ENCODE measurements at regions of chr2 and their contacts with region 1.

Region 1: DNA sequence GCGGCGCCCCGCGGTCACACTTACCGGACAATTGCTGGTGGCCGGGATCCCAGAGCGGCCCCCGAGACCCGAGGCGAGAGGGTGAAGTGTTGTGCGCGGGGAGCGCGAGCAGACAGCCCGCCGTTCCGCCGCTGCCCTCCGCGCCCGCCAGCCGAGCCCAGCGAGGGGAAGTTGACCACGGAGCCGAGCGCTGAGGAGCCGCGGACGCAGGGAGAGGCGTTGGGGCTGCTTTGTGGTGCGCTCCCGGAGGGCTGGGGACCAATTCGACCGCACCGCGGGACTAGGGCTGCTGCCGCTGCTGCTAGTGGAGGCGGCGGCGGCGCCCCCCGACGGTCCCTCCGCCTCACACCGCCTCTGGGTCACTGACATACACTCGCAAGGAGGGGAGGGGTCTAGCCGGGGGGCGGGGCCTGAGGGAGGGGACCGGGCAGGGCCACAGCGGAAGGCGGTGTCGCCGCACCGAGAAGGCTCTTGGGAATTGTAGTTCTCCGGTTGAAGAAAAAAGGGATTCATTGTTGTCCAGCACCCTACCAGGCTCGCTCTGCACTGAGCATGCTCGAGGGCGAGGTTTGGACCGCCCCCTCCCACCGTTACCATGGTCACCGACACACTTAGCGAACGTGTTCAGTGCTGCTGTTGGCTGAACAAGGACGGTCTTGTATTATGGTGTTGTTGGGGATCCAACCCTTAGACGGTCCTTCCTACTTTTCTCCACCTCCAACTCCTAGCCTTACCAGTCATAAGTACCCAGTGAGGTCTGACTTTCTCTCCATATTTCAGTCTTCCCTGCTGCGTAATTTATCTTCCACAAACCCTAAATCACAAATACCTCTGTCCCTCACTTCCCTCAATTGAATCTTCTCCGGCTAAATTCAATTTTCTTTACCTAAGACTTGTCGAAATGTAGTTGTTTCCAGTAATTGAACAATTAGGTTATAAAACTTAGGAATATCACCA is at the start of gene PELI1:
- DNase-seq: peak; percentile 96
- ATAC-seq: peak; percentile 86
- H3K4me3 ChIP-seq: peak within 1 kb of the TSS; percentile 95
- H3K27ac ChIP-seq: peak within 1 kb of the TSS; percentile 85
- H3K4me1 ChIP-seq: peaks cover 3% of the 10 kb centered on the region
- H3K27me3 ChIP-seq: no peaks in the 10 kb centered on the region
- CTCF ChIP-seq: peak; percentile 13 to 49 (median 34); a peak in 3 of 6 replicates
- EP300 ChIP-seq: no peak
- POLR2A ChIP-seq: peak; percentile 97
- RAD21 ChIP-seq: peak; percentile 36; the same call in 1 of the 2 replicates
- polyA plus RNA-seq, gene PELI1: 12.1 to 13.2 TPM

Region 2: DNA sequence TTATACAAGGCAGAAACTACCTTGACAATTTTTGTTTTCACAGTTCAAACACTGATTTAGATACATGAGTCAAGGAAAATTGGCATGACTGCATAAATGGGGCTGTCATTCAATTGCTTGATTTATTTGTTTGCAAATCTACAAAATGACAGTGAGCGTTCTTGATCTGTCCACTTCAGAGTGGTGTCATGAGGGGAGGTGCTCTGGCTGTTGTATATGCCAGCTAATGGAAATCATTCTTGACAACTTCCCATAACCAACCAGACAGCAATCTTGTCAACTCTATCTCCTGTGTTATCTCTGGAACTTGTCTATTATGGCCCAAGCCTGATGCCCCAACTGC is 423.3 kb before region 1 on chr2:
- CTCF ChIA-PET with region 1: no interaction called
- POLR2A ChIA-PET with region 1: no interaction called
- RAD21 ChIA-PET with region 1: no interaction called
- SMC1A ChIA-PET with region 1: no interaction called
- in situ Hi-C with region 1: no loop called
- intact Hi-C with region 1: no loop called
- DNase-seq: no peak
- ATAC-seq: no peak
- H3K4me3 ChIP-seq: no peak overlapping the region
- H3K27ac ChIP-seq: no peak overlapping the region
- H3K4me1 ChIP-seq: no peaks in the 10 kb centered on the region
- H3K27me3 ChIP-seq: no peaks in the 10 kb centered on the region
- CTCF ChIP-seq: no peak
- EP300 ChIP-seq: no peak
- POLR2A ChIP-seq: no peak
- RAD21 ChIP-seq: no peak

Region 3: GRCh38 chr2:64092502-64092901 is 51.8 kb before region 1 on chr2:
- CTCF ChIA-PET with region 1: no interaction called
- POLR2A ChIA-PET with region 1: no interaction called
- RAD21 ChIA-PET with region 1: interaction called, 5 read pairs
- SMC1A ChIA-PET with region 1: interaction called, 4 read pairs
- in situ Hi-C with region 1: no loop called
- intact Hi-C with region 1: loop called (anchors 5 kb)
- DNase-seq: peak; percentile 68
- ATAC-seq: peak; percentile 79
- H3K4me3 ChIP-seq: peak overlapping the region; percentile 18; the same call in 1 of the 2 replicates
- H3K27ac ChIP-seq: peak overlapping the region; percentile 64
- H3K4me1 ChIP-seq: peaks cover 28% of the 10 kb centered on the region
- H3K27me3 ChIP-seq: no peaks in the 10 kb centered on the region
- CTCF ChIP-seq: no peak
- EP300 ChIP-seq: peak; percentile 55 to 82; a peak in 3 of 4 replicates
- POLR2A ChIP-seq: no peak
- RAD21 ChIP-seq: no peak

Region 4: DNA sequence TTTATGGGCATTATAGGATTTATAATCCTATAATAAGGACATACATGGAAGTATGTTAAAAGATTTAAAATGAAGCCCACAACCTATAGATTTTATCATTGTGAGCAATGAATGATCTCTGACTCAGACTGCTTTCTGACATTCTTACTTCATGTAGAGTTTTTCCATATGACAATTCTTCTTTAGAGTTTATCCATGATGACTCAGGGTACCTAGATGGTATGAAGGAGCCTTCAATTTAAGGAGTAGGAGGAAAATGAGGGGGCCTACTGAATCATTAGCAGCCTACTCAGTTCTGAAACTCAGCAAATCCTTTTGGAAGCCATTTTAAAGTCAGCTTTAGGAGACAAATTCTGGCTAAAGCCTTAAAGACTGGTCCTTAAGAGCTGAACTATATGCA is 10.5 kb before region 1 on chr2:
- CTCF ChIA-PET with region 1: interaction called, 8 read pairs
- POLR2A ChIA-PET with region 1: interaction called, 8 read pairs
- RAD21 ChIA-PET with region 1: interaction called, 32 read pairs
- SMC1A ChIA-PET with region 1: interaction called, 40 read pairs
- in situ Hi-C with region 1: no loop called
- intact Hi-C with region 1: no loop called
- DNase-seq: no peak
- ATAC-seq: no peak
- H3K4me3 ChIP-seq: no peak overlapping the region
- H3K27ac ChIP-seq: no peak overlapping the region; the same call in 1 of the 2 replicates
- H3K4me1 ChIP-seq: peaks cover 46% of the 10 kb centered on the region
- H3K27me3 ChIP-seq: no peaks in the 10 kb centered on the region
- CTCF ChIP-seq: no peak
- EP300 ChIP-seq: no peak
- POLR2A ChIP-seq: no peak
- RAD21 ChIP-seq: no peak

Region 5: DNA sequence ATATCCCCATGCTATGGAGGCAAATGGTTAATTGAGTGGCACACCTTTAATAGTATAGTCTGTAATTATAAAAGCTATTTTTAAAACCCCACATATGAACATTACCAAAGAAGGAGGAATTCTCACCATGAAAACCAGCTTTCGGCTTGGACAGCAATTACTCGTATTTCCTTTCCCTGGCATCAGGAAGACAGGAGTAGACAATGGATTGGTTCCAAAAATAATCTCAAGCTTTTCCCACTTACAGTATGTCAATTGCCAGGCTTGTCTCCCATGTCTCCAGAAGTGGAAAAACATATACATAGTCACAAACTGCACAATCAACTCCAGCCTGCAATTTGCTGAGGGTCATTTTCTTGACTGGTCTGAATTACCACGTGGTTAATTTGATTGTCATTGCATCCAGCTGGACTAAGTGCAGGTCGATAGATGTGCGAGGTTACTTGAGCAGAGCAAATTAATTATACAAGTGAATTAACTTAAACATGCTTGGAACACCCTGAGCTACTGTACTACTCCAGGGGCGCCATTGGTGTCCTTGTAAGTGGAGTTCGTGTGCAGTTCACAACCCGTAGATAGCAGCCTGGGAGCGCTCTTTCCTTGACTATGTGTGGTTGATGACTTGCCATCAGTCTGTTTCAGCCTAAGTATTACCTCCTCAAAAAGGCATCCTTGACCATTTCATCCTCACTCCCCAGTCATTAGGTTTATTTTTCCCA is 124.2 kb after region 1 on chr2:
- CTCF ChIA-PET with region 1: no interaction called
- POLR2A ChIA-PET with region 1: no interaction called
- RAD21 ChIA-PET with region 1: no interaction called
- SMC1A ChIA-PET with region 1: no interaction called
- in situ Hi-C with region 1: no loop called
- intact Hi-C with region 1: no loop called
- DNase-seq: no peak
- ATAC-seq: no peak
- H3K4me3 ChIP-seq: no peak overlapping the region
- H3K27ac ChIP-seq: no peak overlapping the region
- H3K4me1 ChIP-seq: no peaks in the 10 kb centered on the region
- H3K27me3 ChIP-seq: no peaks in the 10 kb centered on the region
- CTCF ChIP-seq: no peak
- EP300 ChIP-seq: no peak
- POLR2A ChIP-seq: no peak
- RAD21 ChIP-seq: no peak

Region 6: DNA sequence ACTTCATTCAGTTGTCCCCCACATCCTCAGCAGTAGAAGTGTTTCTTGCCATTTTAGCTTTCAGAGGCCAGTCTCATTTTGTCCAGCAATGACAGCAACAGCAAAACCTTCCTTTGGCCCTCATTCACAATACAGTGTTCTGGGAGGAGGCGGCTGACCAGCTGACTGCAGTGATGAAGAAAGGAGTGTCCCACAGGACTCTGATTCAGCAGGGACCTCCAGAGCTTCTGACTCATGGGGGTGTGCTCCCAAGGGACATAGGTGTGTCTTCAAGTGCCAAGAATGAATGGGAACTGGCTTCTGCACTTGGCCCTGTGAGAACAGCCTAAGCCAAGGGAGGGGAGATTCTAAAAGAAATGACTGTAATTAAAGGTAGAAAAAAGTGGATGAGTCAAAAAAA is 146.8 kb after region 1 on chr2:
- CTCF ChIA-PET with region 1: no interaction called
- POLR2A ChIA-PET with region 1: interaction called, 4 read pairs
- RAD21 ChIA-PET with region 1: interaction called, 9 read pairs
- SMC1A ChIA-PET with region 1: interaction called, 13 read pairs
- in situ Hi-C with region 1: no loop called
- intact Hi-C with region 1: no loop called
- DNase-seq: no peak
- ATAC-seq: no peak
- H3K4me3 ChIP-seq: no peak overlapping the region
- H3K27ac ChIP-seq: no peak overlapping the region
- H3K4me1 ChIP-seq: peaks cover 12% of the 10 kb centered on the region
- H3K27me3 ChIP-seq: no peaks in the 10 kb centered on the region
- CTCF ChIP-seq: no peak
- EP300 ChIP-seq: no peak
- POLR2A ChIP-seq: no peak
- RAD21 ChIP-seq: no peak

Region 7: GRCh38 chr2:64318476-64318748 is 174.1 kb after region 1 on chr2:
- CTCF ChIA-PET with region 1: interaction called, 4 read pairs
- POLR2A ChIA-PET with region 1: interaction called, 3 read pairs
- RAD21 ChIA-PET with region 1: interaction called, 5 read pairs
- SMC1A ChIA-PET with region 1: interaction called, 16 read pairs
- in situ Hi-C with region 1: no loop called
- intact Hi-C with region 1: no loop called
- DNase-seq: no peak
- ATAC-seq: peak; percentile 83
- H3K4me3 ChIP-seq: no peak overlapping the region
- H3K27ac ChIP-seq: no peak overlapping the region
- H3K4me1 ChIP-seq: peaks cover 13% of the 10 kb centered on the region
- H3K27me3 ChIP-seq: no peaks in the 10 kb centered on the region
- CTCF ChIP-seq: no peak
- EP300 ChIP-seq: 0 out of 4 replicates have a peak, but pooled peaks of 1 of the 2 experiments have one; percentile 13
- POLR2A ChIP-seq: no peak
- RAD21 ChIP-seq: no peak

Region 8: GRCh38 chr2:64517511-64517884 is 373.2 kb after region 1 on chr2:
- CTCF ChIA-PET with region 1: no interaction called
- POLR2A ChIA-PET with region 1: no interaction called
- RAD21 ChIA-PET with region 1: no interaction called
- SMC1A ChIA-PET with region 1: no interaction called
- in situ Hi-C with region 1: no loop called
- intact Hi-C with region 1: no loop called
- DNase-seq: no peak
- ATAC-seq: no peak
- H3K4me3 ChIP-seq: no peak overlapping the region
- H3K27ac ChIP-seq: no peak overlapping the region
- H3K4me1 ChIP-seq: no peaks in the 10 kb centered on the region
- H3K27me3 ChIP-seq: peaks cover 0 to 6% of the 10 kb centered on the region in 2 experiments; a peak in 1 of 4 replicates
- CTCF ChIP-seq: no peak
- EP300 ChIP-seq: no peak
- POLR2A ChIP-seq: no peak
- RAD21 ChIP-seq: no peak

Region 9: DNA sequence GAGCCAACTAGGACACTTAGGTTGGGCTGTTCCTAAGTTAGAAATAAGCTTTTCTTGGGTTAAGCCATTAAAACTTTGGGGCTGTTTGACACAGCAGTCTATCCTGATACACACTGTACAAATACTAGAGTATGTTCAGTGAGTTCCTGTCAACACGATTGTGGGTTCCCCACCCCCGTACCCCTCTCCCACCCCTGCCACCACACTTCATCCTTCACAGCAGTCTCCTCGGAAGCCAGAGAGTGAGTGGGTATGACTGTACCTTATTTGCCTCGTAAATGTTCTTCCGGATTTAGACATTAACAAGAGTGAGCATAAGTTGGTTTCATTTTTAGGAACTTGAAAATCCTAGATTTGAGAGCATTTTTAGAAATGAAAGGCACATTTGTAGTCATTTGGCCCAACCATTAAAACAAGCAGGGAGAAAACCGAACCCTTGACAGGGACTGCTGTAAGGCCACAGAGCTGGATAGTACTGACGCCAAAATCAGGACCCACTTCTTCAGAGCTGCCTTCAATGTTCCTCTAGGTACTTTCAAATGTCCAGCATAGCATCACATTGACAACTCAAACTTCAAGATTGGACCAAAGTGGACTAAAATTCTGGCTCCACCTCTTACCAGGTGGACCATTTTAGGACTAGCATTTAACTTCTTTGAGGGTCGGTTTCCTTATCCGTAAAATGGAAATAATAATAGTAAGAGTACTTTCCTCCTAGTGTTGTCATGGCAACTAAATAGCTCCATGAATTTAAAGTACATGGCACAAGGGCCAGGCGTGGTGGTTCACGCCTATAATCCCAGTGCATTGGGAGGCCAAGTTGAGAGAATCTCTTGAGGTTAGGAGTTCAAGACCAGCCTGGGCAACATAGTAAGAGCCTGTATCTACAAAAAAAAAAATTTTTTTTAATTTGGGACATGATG is 675.7 kb after region 1 on chr2:
- CTCF ChIA-PET with region 1: no interaction called
- POLR2A ChIA-PET with region 1: no interaction called
- RAD21 ChIA-PET with region 1: no interaction called
- SMC1A ChIA-PET with region 1: no interaction called
- in situ Hi-C with region 1: no loop called
- intact Hi-C with region 1: no loop called
- DNase-seq: peak; percentile 78
- ATAC-seq: peak; percentile 97
- H3K4me3 ChIP-seq: peak overlapping the region; percentile 18; the same call in 1 of the 2 replicates
- H3K27ac ChIP-seq: peak overlapping the region; percentile 75
- H3K4me1 ChIP-seq: peaks cover 25% of the 10 kb centered on the region
- H3K27me3 ChIP-seq: no peaks in the 10 kb centered on the region
- CTCF ChIP-seq: no peak
- EP300 ChIP-seq: no peak
- POLR2A ChIP-seq: 0 out of 2 replicates have a peak, but pooled peaks have one; percentile 21
- RAD21 ChIP-seq: peak; percentile 10; the same call in 1 of the 2 replicates

Measured in GM12878 (cell line).